ENCODE measurements at regions of chr1 and their contacts with region 1.

Region 1: GRCh38 chr1:108559215-108560186 is at the start of gene EEIG2:
- DNase-seq: peak; percentile 94
- ATAC-seq: peak; percentile 84
- H3K4me3 Mint-ChIP-seq: peak within 1 kb of the TSS; percentile 90
- H3K27ac Mint-ChIP-seq: peak within 1 kb of the TSS; percentile 81
- H3K4me1 Mint-ChIP-seq: peaks cover 41% of the 10 kb centered on the region
- H3K27me3 Mint-ChIP-seq: no peaks in the 10 kb centered on the region
- total RNA-seq, gene EEIG2: 5.0 to 7.6 TPM

Region 2: GRCh38 chr1:107952989-107953388 is 606.5 kb before region 1 on chr1:
- CTCF ChIA-PET with region 1: no interaction called
- POLR2A ChIA-PET with region 1: no interaction called
- intact Hi-C with region 1: no loop called
- DNase-seq: no peak
- ATAC-seq: no peak
- H3K4me3 Mint-ChIP-seq: no peak overlapping the region
- H3K27ac Mint-ChIP-seq: no peak overlapping the region
- H3K4me1 Mint-ChIP-seq: peaks cover 34% of the 10 kb centered on the region
- H3K27me3 Mint-ChIP-seq: no peaks in the 10 kb centered on the region

Region 3: GRCh38 chr1:108199781-108200570 is 359.5 kb before region 1 on chr1 and contains the start of gene SLC25A24:
- CTCF ChIA-PET with region 1: no interaction called
- POLR2A ChIA-PET with region 1: no interaction called
- intact Hi-C with region 1: loop called in 1 of 2 experiments (anchors 5 kb)
- DNase-seq: peak; percentile 86
- ATAC-seq: peak; percentile 97
- H3K4me3 Mint-ChIP-seq: peak within 1 kb of the TSS; percentile 84
- H3K27ac Mint-ChIP-seq: peak within 1 kb of the TSS; percentile 78
- H3K4me1 Mint-ChIP-seq: peaks cover 26% of the 10 kb centered on the region
- H3K27me3 Mint-ChIP-seq: no peaks in the 10 kb centered on the region
- total RNA-seq, gene SLC25A24: 13.6 to 15.4 TPM

Region 4: DNA sequence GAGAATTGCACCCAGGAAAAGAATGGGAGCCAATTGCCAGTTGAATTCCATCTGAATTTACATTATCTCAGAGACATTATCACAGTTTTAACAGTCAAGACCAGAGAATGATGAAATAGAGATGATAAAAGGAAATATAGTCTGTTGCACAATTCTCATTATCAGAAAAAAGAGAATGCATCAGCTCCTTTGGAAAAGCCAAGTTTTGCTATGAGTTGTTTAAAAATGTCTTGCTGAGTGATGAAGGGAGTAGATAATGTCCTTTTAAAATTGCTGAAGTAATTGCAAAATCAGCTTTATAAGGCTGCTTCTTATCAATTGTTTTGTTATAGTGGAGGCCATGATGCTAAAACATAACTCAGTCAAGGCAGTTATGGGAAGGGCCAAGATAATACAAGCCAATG is 37.5 kb before region 1 on chr1:
- CTCF ChIA-PET with region 1: interaction called, 12 read pairs
- POLR2A ChIA-PET with region 1: no interaction called
- intact Hi-C with region 1: no loop called
- DNase-seq: no peak
- ATAC-seq: no peak
- H3K4me3 Mint-ChIP-seq: no peak overlapping the region
- H3K27ac Mint-ChIP-seq: no peak overlapping the region
- H3K4me1 Mint-ChIP-seq: no peaks in the 10 kb centered on the region
- H3K27me3 Mint-ChIP-seq: peaks cover 17% of the 10 kb centered on the region

Region 5: GRCh38 chr1:108575375-108575774 is 15.9 kb after region 1 on chr1:
- CTCF ChIA-PET with region 1: interaction called, 22 read pairs
- POLR2A ChIA-PET with region 1: no interaction called
- intact Hi-C with region 1: no loop called
- DNase-seq: no peak
- ATAC-seq: no peak
- H3K4me3 Mint-ChIP-seq: no peak overlapping the region
- H3K27ac Mint-ChIP-seq: peak overlapping the region; percentile 1
- H3K4me1 Mint-ChIP-seq: peaks cover 8% of the 10 kb centered on the region
- H3K27me3 Mint-ChIP-seq: no peaks in the 10 kb centered on the region

Region 6: DNA sequence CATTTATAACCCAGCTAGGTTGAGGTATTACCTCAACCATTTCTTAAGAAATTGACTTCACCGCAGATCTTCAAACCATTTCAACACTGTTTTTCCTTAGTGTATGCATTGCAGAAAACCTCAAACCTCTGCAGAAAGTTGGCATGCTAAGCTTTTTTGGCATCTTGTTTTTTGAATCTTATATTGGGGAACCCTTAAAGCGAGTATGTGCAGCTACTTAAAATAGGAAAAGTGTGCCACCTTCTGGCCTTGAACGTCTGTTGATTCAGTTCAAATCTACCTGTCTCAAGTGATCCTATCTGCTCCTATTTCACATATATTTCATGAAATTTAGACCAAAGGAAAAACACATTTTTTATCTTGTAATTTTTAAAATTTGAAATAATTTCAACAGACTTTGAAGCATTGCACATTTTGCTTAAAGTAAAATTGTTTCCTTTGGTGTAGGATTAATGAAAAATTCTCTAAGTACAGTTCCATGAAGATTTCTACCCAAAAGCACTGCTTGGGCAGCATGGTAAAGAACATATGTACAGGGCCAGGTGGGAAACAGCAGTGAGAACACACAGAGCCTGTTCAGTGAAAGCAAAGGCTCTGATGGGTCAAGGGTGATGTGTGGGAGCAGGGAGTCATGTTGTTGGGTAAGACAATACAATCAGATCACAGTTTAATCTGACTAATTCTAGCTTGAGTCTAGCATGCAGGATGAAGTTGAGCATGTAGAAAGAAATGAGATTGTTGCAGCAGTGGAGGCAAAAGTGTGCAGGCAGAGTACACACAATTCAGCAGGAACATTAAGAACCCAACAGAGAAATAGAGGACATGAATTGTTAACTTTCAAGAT is 84.2 kb after region 1 on chr1:
- CTCF ChIA-PET with region 1: interaction called, 35 read pairs
- POLR2A ChIA-PET with region 1: interaction called, 3 read pairs
- intact Hi-C with region 1: loop called (anchors 1 to 2 kb)
- DNase-seq: peak; percentile 64
- ATAC-seq: peak; percentile 47
- H3K4me3 Mint-ChIP-seq: no peak overlapping the region
- H3K27ac Mint-ChIP-seq: peak overlapping the region; percentile 72
- H3K4me1 Mint-ChIP-seq: peaks cover 71% of the 10 kb centered on the region
- H3K27me3 Mint-ChIP-seq: no peaks in the 10 kb centered on the region

Measured in activated CD4-positive, alpha-beta T cell treated with anti-CD3 and anti-CD28 coated beads for 36 hours (primary cell).